ENCODE measurements at regions of chr3 and their contacts with region 1.

Region 1: DNA sequence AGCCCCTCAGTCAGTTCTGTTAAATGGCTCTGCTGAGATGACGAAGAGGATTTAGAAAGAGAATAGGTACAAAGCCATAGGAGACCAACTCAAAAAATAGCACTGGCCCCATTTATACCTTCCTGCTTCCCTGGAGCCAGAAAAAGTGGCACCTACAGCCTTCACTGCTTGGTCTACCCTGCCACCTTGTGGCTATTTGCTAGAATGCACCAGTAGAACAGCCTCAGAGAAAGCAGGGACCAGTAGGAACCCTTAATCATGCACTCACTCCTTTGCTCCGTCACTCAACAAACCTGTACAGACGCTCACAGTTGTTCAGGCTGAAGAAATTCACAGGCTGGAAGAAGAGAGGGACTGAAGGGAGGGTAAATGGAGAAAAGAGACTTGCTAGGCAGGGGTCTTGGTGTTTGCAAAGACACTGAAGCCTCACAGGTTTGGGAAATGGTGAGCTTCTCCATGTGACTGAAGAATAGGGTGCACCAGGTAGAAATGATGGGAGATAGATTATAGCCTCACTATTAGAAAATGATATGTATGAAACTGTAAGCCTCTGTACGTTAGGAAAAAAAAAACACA is 12.1 kb upstream of the RTP2 start:
- DNase-seq: no peak

Region 2: GRCh38 chr3:187223799-187224198 is 490.7 kb before region 1 on chr3:
- intact Hi-C with region 1: loop called (anchors 2 kb)
- DNase-seq: no peak

Region 3: GRCh38 chr3:187587076-187587475 is 127.4 kb before region 1 on chr3:
- intact Hi-C with region 1: no loop called
- DNase-seq: no peak

Region 4: GRCh38 chr3:188244395-188244861 is 529.9 kb after region 1 on chr3:
- intact Hi-C with region 1: no loop called
- DNase-seq: no peak